Heart left ventricle (tissue), 16 donors: ENCODE measurements at regions of chr7 and their contacts with region 1.

Region 1: GRCh38 chr7:80249619-80250295 is 115.1 kb downstream of the GNAI1 start:
- DNase-seq: no peak
- ATAC-seq: no peak
- H3K4me3 ChIP-seq: no peak overlapping the region
- H3K27ac ChIP-seq: no peak overlapping the region
- H3K4me1 ChIP-seq: peaks cover 0 to 6% (median under 1%) of the 10 kb centered on the region in 12 donors
- H3K27me3 ChIP-seq: no peaks in the 10 kb centered on the region
- CTCF ChIP-seq: no peak
- POLR2A ChIP-seq: no peak

Region 2: DNA sequence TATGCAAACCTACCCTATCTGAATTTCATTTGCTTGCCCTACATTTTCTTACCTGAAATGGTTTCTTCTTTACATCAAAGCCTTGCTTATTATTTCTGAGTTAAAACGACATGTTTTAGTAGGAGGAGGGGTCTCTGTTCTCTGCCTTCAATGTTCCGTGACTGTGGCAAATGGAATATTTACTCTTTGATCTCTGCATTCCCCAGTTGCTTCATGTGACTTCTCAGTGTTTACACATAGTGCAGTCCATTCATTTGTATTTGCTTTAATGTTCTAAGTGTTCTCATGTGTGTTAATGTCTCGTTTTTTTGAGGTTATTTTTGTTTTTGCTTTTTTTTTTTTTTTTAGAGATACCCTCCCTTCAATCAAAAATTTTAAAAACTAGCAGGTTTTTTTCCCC is 39.4 kb before region 1 on chr7:
- intact Hi-C with region 1: no loop called
- DNase-seq: no peak
- ATAC-seq: no peak
- H3K4me3 ChIP-seq: no peak overlapping the region
- H3K27ac ChIP-seq: no peak overlapping the region
- H3K4me1 ChIP-seq: no peaks in the 10 kb centered on the region
- H3K27me3 ChIP-seq: no peaks in the 10 kb centered on the region
- CTCF ChIP-seq: no peak
- POLR2A ChIP-seq: no peak

Region 3: DNA sequence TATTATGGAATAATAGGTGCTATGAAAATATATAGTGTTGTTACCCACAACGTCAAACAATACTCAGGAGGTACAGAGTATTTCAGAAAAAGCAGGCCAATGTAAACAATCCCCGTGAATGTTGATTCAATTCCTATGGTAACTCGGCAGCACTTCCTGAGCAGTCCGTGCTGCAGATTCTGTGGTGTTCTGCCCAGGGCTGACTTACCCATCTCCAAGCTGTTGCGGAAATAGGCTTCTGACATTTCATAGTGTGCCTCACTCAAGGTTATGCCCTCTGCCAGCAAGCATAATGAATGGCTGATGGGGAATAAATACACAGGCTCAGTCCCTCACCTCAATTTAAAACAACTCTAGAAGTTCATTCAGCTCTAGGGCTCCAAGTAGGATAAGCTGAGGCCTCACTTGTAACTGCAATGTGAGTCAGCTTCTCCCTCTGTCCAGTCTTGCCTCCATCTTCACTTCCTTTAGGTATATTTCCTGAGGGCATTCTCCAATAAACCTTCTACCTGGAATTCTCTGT is 62.4 kb after region 1 on chr7:
- intact Hi-C with region 1: loop called in 1 of 10 experiments (anchors 10 kb)
- DNase-seq: no peak
- ATAC-seq: peak in 3 of 4 donors; percentile 27 to 42 (median 39)
- H3K4me3 ChIP-seq: no peak overlapping the region
- H3K27ac ChIP-seq: no peak overlapping the region
- H3K4me1 ChIP-seq: peaks cover 0 to 24% (median 5%) of the 10 kb centered on the region in 12 donors
- H3K27me3 ChIP-seq: no peaks in the 10 kb centered on the region
- CTCF ChIP-seq: no peak
- POLR2A ChIP-seq: no peak

Region 4: GRCh38 chr7:80622541-80622940 is 372.8 kb after region 1 on chr7:
- intact Hi-C with region 1: no loop called
- DNase-seq: no peak
- ATAC-seq: peak in 2 of 4 donors; percentile 33 to 49
- H3K4me3 ChIP-seq: peak overlapping the region in 1 of 12 donors; percentile 15
- H3K27ac ChIP-seq: peak overlapping the region in 11 of 12 donors; percentile 52 to 84 (median 72)
- H3K4me1 ChIP-seq: peaks cover 6 to 85% (median 31%) of the 10 kb centered on the region in 12 donors
- H3K27me3 ChIP-seq: no peaks in the 10 kb centered on the region
- CTCF ChIP-seq: no peak
- POLR2A ChIP-seq: no peak